ENCODE measurements at regions of chr12 and their contacts with region 1.

Region 1: GRCh38 chr12:14257734-14258574 is 107.5 kb upstream of the ATF7IP start:
- DNase-seq: peak; percentile 95
- H3K4me3 Mint-ChIP-seq: peak overlapping the region; percentile 81
- H3K27ac Mint-ChIP-seq: peak overlapping the region; percentile 99
- H3K4me1 Mint-ChIP-seq: peaks cover 45% of the 10 kb centered on the region
- H3K27me3 Mint-ChIP-seq: no peaks in the 10 kb centered on the region

Region 2: DNA sequence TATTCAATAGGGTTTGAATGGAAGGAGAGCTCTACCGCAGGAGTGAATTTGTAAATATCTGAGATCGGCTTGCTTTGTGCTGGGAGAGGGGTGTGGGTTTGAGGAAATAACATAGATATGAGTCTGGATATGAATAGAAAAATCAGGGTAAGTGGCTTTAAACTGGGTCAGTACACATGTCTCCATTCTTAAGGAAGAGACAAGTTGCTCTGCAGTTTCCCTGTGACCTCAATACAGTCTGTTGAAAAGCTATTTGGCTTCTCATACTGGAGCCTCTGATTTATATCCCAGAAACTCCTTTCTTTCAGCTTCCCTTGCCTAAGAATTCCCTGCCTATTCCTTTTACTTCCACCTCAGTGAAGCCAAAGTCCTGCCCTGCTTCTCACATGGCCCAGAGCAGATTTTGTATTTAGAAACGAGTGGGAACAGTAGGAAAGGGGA is 46.0 kb before region 1 on chr12:
- intact Hi-C with region 1: no loop called
- DNase-seq: no peak
- H3K4me3 Mint-ChIP-seq: no peak overlapping the region
- H3K27ac Mint-ChIP-seq: no peak overlapping the region
- H3K4me1 Mint-ChIP-seq: peaks cover 4% of the 10 kb centered on the region
- H3K27me3 Mint-ChIP-seq: no peaks in the 10 kb centered on the region

Region 3: DNA sequence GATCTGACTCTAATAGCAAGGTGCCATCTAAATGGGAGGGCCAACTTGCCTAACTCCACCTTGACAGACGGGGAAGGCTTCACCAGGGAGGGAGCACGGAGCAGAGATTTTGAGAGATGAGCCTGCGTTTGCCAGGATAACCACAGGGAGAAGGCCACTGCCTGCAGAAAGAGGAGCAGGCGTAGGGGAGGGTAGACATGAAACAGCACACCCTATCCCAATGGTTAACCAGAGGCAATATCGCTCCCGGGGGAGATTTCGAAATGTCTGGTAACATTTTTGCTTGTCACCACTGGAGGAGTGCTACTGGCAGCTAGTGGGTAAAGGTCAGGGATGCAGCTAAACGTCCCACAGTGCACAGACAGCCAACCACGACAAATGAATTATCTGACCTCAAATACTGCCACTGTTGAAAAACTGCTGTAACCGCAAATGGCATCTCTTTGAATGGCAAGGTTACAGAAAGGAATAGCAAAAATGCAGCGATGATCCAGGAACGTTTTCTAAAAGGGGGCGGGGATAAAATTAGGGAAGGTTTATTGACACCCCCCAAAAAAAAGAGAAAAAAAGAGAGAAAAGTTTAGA is 18.5 kb before region 1 on chr12:
- intact Hi-C with region 1: loop called (anchors 1 kb)
- DNase-seq: peak; percentile 74
- H3K4me3 Mint-ChIP-seq: peak overlapping the region; percentile 82
- H3K27ac Mint-ChIP-seq: peak overlapping the region; percentile 82
- H3K4me1 Mint-ChIP-seq: peaks cover 20% of the 10 kb centered on the region
- H3K27me3 Mint-ChIP-seq: no peaks in the 10 kb centered on the region

Region 4: GRCh38 chr12:14314801-14315200 is 56.8 kb after region 1 on chr12:
- intact Hi-C with region 1: loop called (anchors 10 kb)
- DNase-seq: no peak
- H3K4me3 Mint-ChIP-seq: no peak overlapping the region
- H3K27ac Mint-ChIP-seq: no peak overlapping the region
- H3K4me1 Mint-ChIP-seq: no peaks in the 10 kb centered on the region
- H3K27me3 Mint-ChIP-seq: no peaks in the 10 kb centered on the region

Region 5: DNA sequence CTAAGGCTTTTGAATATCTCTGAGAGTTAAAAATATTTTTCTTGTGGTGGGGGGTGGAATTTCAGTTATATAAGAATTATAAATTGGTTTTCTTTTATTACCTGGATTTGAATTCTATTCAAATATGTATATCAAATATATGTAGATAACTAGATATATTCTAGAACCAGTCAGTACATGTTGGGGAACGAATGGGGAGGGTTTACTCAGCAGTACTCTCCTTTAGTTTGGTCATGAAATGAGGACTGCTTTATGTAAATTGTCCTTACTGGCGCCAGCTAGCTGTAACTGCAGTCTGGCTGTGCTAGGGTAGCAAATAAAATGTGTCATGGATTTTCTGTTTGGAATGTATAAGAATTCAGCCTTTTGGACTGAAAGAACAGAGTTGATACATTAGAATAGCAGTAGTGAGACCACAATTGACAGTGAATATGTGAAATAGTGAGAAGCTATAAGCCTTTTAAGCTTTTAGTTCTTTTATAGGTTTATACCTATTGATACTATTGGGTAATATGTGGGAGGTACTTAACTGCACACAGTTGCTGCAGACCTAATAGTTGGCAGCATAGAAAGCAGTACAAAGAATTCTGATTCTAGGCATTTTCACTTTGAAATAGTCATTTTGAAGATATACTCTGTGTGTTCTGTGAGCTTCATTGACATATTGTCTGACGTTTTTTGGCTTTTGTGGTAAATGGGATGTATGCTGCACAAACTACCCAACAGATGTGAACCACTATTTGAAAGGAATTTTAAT is 136.5 kb after region 1 on chr12:
- intact Hi-C with region 1: loop called (anchors 1 kb)
- DNase-seq: peak; percentile 84
- H3K4me3 Mint-ChIP-seq: peak overlapping the region; percentile 78
- H3K27ac Mint-ChIP-seq: peak overlapping the region; percentile 93
- H3K4me1 Mint-ChIP-seq: peaks cover 59% of the 10 kb centered on the region
- H3K27me3 Mint-ChIP-seq: no peaks in the 10 kb centered on the region

Region 6: DNA sequence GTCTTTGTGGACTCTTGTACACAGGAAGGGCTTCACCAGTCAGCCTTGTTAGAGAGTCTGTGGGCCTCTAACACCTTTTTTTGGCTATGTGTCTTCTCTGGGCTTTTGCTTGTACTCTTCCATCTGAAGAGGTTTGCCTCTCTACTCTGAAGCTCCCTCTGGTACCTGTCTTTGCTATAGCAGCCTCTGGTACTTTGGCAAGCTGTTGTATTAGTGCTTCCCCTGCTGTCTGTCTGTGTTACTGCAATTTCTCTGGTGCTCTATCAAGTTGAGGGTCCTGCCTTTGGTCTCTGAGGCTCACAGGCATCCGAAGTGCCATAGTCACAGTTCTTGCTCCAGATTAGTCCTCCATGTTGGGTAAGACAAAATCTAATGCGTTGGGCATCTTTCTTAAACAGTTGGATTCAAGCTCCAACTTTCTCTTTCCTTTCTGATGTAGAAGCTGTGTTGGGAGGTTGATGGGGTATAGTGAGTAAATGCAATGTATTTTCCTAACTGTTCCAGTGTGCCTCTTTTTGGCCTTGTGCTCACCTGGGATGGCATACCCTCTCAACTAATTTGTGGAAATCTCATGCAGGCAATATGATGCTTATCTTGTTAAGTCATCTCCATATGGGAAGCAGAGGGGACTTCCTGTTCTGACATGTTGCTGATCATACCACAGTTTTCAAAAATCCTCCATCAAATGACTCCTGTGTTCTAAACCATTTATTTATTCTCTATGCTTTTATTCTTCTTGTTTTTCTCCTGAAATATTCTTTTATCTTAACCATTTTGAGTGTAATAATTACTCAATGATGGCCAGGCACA is 196.3 kb after region 1 on chr12:
- intact Hi-C with region 1: loop called (anchors 1 kb)
- DNase-seq: peak; percentile 80
- H3K4me3 Mint-ChIP-seq: peak overlapping the region; percentile 39
- H3K27ac Mint-ChIP-seq: peak overlapping the region; percentile 69
- H3K4me1 Mint-ChIP-seq: peaks cover 47% of the 10 kb centered on the region
- H3K27me3 Mint-ChIP-seq: no peaks in the 10 kb centered on the region